Activated B cell treated with CpG ODN at 0.5 μM for 24 hours (primary cell): ENCODE measurements at regions of chr10 and their contacts with region 1.

Region 1: GRCh38 chr10:61987951-61988379 is 86.5 kb downstream of the ARID5B start:
- DNase-seq: no peak
- ATAC-seq: peak; percentile 90
- H3K4me3 Mint-ChIP-seq: peak overlapping the region; percentile 79
- H3K27ac Mint-ChIP-seq: peak overlapping the region; percentile 97
- H3K4me1 Mint-ChIP-seq: peaks cover 92% of the 10 kb centered on the region
- H3K27me3 Mint-ChIP-seq: no peaks in the 10 kb centered on the region
- CTCF ChIP-seq: no peak

Region 2: GRCh38 chr10:61943674-61944410 is 44.1 kb before region 1 on chr10:
- CTCF ChIA-PET with region 1: interaction called, 3 read pairs
- POLR2A ChIA-PET with region 1: interaction called, 46 read pairs
- intact Hi-C with region 1: loop called (anchors 1 kb)
- DNase-seq: no peak
- ATAC-seq: peak; percentile 65
- H3K4me3 Mint-ChIP-seq: peak overlapping the region; percentile 44
- H3K27ac Mint-ChIP-seq: peak overlapping the region; percentile 91
- H3K4me1 Mint-ChIP-seq: peaks cover 66% of the 10 kb centered on the region
- H3K27me3 Mint-ChIP-seq: no peaks in the 10 kb centered on the region
- CTCF ChIP-seq: no peak

Region 3: DNA sequence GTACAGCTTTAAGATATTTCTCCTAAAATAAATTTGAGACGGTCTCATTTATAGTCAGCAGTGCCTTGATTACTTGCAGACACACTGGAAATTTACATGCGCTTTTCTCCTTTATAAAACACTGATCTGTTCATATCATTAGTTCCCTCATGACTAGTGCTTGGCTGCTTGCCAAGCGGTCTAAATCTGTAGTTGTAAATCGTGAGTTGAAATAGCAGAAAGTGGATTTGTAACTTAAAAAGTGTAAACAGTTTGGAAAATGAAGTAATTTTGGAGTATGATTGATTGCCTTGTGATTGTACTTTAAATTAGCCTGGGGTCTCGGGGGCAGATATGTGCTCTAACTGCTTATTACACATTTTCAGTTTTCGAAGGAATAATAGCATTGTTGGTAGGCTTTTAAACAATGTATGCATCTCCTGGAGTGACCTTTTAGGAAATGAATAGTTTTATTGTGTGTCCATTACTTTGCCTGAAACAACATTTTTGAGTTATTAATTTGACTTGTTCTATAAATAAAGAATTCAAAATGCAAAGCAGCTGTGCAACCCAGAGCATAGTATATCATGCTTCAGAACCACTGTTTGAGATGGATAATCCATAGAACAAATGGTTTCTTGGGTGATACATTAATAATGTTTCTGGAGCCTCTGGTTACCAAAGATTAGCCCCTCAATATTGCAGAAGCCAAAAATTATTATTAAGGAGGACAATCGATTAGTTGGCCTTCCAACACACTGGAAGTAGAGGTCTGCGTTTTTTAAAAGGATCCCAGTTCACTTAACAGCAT is 13.2 kb before region 1 on chr10:
- CTCF ChIA-PET with region 1: interaction called, 3 read pairs
- POLR2A ChIA-PET with region 1: interaction called, 53 read pairs
- intact Hi-C with region 1: loop called (anchors 1 kb)
- DNase-seq: no peak
- ATAC-seq: no peak
- H3K4me3 Mint-ChIP-seq: peak overlapping the region; percentile 60
- H3K27ac Mint-ChIP-seq: peak overlapping the region; percentile 81
- H3K4me1 Mint-ChIP-seq: peaks cover 84% of the 10 kb centered on the region
- H3K27me3 Mint-ChIP-seq: no peaks in the 10 kb centered on the region
- CTCF ChIP-seq: no peak

Region 4: GRCh38 chr10:62016623-62017490 is 28.9 kb after region 1 on chr10:
- CTCF ChIA-PET with region 1: interaction called, 10 read pairs
- POLR2A ChIA-PET with region 1: interaction called, 65 read pairs
- intact Hi-C with region 1: loop called (anchors 1 kb)
- DNase-seq: peak; percentile 40
- ATAC-seq: peak; percentile 65
- H3K4me3 Mint-ChIP-seq: peak overlapping the region; percentile 66
- H3K27ac Mint-ChIP-seq: peak overlapping the region; percentile 96
- H3K4me1 Mint-ChIP-seq: peaks cover 84% of the 10 kb centered on the region
- H3K27me3 Mint-ChIP-seq: no peaks in the 10 kb centered on the region
- CTCF ChIP-seq: no peak

Region 5: GRCh38 chr10:62045765-62046521 is 58.0 kb after region 1 on chr10:
- CTCF ChIA-PET with region 1: interaction called, 4 read pairs
- POLR2A ChIA-PET with region 1: interaction called, 70 read pairs
- intact Hi-C with region 1: loop called (anchors 1 kb)
- DNase-seq: no peak
- ATAC-seq: peak; percentile 4
- H3K4me3 Mint-ChIP-seq: peak overlapping the region; percentile 85
- H3K27ac Mint-ChIP-seq: peak overlapping the region; percentile 93
- H3K4me1 Mint-ChIP-seq: peaks cover 100% of the 10 kb centered on the region
- H3K27me3 Mint-ChIP-seq: no peaks in the 10 kb centered on the region
- CTCF ChIP-seq: no peak